Posterior vena cava (tissue), 2 donors: ENCODE measurements at regions of chr22 and their contacts with region 1.

Region 1: DNA sequence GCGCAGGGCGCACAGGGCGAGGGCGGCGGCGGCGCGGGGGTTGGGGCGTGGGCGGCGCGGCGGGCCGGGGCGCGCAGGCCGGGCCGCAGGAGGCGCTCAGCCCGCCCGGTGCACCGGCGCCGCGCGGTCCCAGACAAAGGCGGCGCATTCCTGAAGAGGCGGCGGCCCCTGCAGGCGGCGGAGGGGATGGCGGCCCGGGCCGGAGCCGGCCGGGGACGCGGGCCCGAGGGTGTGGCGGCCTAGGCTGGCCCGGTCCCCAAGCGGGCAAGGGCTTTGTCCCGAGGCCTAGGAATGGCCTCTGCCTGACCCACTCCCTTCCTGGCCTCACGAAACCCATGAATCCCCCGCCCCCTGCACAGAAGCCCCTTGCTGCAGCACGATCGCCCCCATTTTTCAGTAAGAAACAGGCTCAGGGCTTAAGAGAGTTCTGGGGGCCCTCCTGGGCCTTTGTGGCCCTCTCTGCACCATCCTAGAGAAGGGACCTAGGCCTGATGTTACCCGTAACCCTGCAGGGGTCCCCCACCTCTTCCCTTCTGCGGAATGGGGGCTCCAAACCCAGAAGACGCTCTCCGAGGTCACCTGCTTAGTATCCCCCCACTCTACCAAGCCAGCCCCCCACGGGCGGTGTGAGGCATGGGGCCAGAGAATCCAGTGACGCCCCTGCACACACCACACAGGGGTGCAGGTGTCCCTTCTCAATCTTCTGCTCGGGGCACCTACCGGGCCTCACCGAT is at the start of gene RTN4R:
- DNase-seq: peak; percentile 87
- total RNA-seq, gene RTN4R: 0.19 to 0.76 TPM

Region 2: GRCh38 chr22:20156611-20157429 is 111.6 kb before region 1 on chr22:
- intact Hi-C with region 1: loop called (anchors 1 to 5 kb)
- DNase-seq: peak; percentile 94

Region 3: GRCh38 chr22:20174785-20175596 is 93.5 kb before region 1 on chr22:
- intact Hi-C with region 1: loop called in 1 of 2 experiments (anchors 5 kb)
- DNase-seq: no peak

Region 4: DNA sequence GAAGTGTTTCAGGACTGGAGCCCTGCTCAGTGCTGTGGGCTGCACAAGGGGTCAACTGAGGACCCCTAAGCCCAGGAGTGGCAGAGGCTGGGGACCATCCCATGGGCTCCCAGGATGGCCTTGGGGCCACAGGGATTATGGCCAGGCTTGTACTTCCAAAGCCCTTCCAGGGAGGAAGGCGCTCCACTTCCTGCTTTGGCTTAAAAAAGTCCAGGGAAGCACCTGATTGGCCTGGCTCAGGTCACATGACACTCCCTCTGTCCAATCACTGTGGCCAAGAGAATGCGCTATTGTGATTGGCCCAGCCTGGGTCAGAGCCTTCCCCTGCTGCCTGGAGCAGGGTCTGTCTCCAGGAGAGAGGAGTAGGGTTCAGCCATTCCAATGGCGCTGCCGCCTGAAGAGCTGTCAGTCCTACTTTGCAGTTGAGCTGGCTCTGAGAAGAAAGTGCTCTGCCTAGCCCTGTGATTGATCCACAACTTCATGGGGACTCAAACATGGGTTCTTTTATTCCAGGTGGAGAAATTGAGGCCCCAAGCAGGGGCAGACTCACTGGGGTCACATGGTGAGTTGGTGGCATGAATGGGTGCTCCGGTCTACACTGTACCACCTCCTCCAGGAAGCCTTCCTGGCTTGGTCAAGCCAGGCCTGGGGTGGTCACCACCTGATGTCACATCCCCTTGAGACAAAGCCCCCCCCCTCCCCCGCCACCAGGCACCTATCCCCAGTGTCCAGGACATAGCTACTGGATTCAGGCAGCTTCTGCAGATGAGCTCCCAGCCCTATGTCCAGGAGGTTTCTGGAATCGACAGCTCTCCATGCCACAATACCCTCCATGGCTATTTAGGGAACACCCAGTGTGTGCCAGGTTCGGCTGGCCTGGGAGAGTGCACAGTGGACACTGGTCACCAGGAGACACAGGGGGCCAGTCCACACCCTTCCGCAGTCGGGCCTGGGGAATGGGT is 48.5 kb before region 1 on chr22:
- intact Hi-C with region 1: loop called in 1 of 2 experiments (anchors 5 kb)
- DNase-seq: no peak

Region 5: DNA sequence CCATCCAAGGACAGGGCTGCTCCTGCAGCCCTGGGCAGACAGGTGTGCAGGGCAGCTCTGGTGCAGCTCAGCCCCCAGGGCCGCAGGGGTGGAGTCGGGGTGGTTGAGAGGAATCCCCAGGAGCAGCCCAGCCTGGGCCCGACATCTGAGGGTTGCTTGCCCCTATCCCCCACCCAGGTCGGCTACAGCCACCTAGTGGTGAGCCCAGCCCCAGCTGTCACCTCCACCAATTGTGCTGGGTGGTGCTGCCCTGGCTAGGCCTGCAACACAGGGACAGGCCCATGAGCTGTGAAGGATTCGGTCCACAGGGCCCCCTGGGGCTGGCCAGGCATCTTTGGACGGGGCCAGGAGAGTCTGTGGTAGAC is 29.9 kb before region 1 on chr22:
- intact Hi-C with region 1: no loop called
- DNase-seq: no peak

Region 6: DNA sequence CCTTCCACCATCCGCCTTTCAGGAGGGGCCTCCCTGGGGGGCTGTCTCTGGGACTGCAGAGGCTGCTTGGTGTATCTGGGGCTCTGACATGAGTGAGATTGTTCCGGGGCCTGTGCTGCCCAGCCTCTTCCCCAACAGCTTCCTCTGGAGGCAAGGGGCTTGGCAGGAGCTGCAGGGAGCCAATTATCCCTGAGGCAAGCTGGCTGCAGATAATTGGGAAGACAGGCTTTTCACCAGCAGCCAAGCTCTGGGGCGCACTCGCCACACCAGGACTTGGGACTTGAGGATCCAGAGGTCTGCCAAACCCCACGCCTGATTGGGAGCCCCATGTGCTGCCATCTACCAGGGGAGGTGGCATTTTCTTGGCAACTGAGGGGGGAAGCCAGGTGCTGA is 15.2 kb after region 1 on chr22:
- intact Hi-C with region 1: no loop called
- DNase-seq: no peak